ENCODE measurements at regions of chr11 and their contacts with region 1.

Region 1: GRCh38 chr11:59135648-59136461 is 6.8 kb upstream of the FAM111A start:
- DNase-seq: peak; percentile 43 to 78
- H3K4me3 ChIP-seq: no peak overlapping the region
- H3K27ac ChIP-seq: no peak overlapping the region
- H3K4me1 ChIP-seq: no peaks in the 10 kb centered on the region
- H3K27me3 ChIP-seq: no peaks in the 10 kb centered on the region
- CTCF ChIP-seq: peak; percentile 94

Region 2: GRCh38 chr11:59053387-59053786 is 82.5 kb before region 1 on chr11:
- CTCF ChIA-PET with region 1: no interaction called
- POLR2A ChIA-PET with region 1: no interaction called
- intact Hi-C with region 1: loop called (anchors 1 kb)
- DNase-seq: peak in 1 of 2 experiments; percentile 19
- H3K4me3 ChIP-seq: no peak overlapping the region
- H3K27ac ChIP-seq: no peak overlapping the region
- H3K4me1 ChIP-seq: no peaks in the 10 kb centered on the region
- H3K27me3 ChIP-seq: peaks cover 16% of the 10 kb centered on the region; the same call in 1 of the 2 replicates
- CTCF ChIP-seq: peak; percentile 75

Region 3: DNA sequence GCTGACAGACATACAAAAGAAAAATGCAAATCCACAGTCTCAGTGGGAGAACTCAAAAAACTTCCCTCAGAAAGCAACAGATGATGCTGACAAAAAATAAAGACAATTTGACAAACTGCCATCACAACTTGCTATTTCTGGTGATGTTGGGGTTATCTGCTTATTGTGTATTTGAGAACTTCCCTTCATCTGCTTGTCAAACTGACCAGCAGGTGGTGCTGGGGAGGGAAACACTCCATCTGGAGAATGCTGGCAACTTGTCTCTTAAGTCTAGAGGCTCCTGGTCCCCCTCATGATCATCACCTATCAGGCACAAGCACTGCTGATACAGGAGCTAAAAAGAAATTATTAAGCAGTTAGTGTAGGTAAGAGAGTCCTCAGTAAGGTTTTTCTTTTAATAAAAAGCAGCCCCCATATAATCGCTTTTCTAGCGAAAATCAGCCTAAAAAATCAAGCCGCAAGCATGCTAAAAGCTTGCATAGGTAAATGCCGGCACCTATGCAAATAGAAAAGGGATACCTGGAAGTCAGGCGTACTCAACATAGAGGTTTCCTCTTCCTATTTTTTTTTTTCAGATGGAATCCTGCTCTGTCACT is 38.6 kb before region 1 on chr11:
- CTCF ChIA-PET with region 1: no interaction called
- POLR2A ChIA-PET with region 1: no interaction called
- intact Hi-C with region 1: loop called (anchors 1 kb)
- DNase-seq: peak in 1 of 2 experiments; percentile 16
- H3K4me3 ChIP-seq: no peak overlapping the region
- H3K27ac ChIP-seq: no peak overlapping the region
- H3K4me1 ChIP-seq: no peaks in the 10 kb centered on the region
- H3K27me3 ChIP-seq: peaks cover 49% of the 10 kb centered on the region
- CTCF ChIP-seq: peak; percentile 72